ENCODE measurements at regions of chr6 and their contacts with region 1.

Region 1: GRCh38 chr6:110682460-110682853 is 132.8 kb downstream of the CDK19 start:
- DNase-seq: peak; percentile 54 to 85 (median 62)
- ATAC-seq: peak; percentile 100
- H3K4me3 ChIP-seq: no peak overlapping the region
- H3K27ac ChIP-seq: no peak overlapping the region
- H3K4me1 ChIP-seq: no peaks in the 10 kb centered on the region
- H3K27me3 ChIP-seq: no peaks in the 10 kb centered on the region
- CTCF ChIP-seq: peak; percentile 72 to 91 (median 72)
- EP300 ChIP-seq: peak; percentile 36; the same call in 1 of the 2 replicates
- POLR2A ChIP-seq: no peak
- RAD21 ChIP-seq: peak; percentile 97

Region 2: GRCh38 chr6:110528101-110528929 is 154.1 kb before region 1 on chr6:
- CTCF ChIA-PET with region 1: interaction called, 3 read pairs
- POLR2A ChIA-PET with region 1: no interaction called
- in situ Hi-C with region 1: no loop called
- intact Hi-C with region 1: loop called (anchors 1 kb)
- DNase-seq: peak; percentile 51 to 70 (median 56)
- ATAC-seq: peak; percentile 91
- H3K4me3 ChIP-seq: no peak overlapping the region
- H3K27ac ChIP-seq: no peak overlapping the region
- H3K4me1 ChIP-seq: no peaks in the 10 kb centered on the region; a peak in 1 of 5 replicates
- H3K27me3 ChIP-seq: peaks cover 5 to 13% of the 10 kb centered on the region in 2 experiments; a peak in 3 of 5 replicates
- CTCF ChIP-seq: peak; percentile 44 to 87 (median 73); a peak in 5 of 6 replicates
- EP300 ChIP-seq: no peak
- POLR2A ChIP-seq: no peak
- RAD21 ChIP-seq: peak; percentile 90 to 92

Region 3: DNA sequence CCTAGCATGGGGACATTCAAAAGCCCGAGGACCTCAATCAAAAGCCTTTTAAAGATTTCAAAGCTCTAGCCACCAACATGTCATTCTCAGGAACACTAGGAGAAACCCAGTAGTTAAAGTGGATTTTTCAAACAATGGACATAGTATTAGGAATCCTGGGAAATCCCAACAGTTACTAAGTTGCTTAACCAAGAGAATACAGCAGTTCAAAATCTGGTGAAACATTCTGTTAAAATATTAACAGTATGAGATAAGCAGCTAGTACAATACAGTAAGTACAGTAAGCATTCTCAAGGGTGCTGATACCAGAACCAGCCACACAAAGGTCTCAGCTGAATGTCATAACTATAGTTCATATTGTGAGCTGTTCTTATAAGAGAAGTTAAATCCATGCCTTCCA is 64.2 kb after region 1 on chr6:
- CTCF ChIA-PET with region 1: no interaction called
- POLR2A ChIA-PET with region 1: no interaction called
- in situ Hi-C with region 1: no loop called
- intact Hi-C with region 1: no loop called
- DNase-seq: no peak
- ATAC-seq: peak; percentile 57; the same call in 1 of the 3 replicates
- H3K4me3 ChIP-seq: no peak overlapping the region
- H3K27ac ChIP-seq: no peak overlapping the region
- H3K4me1 ChIP-seq: peaks cover 0 to 5% of the 10 kb centered on the region in 2 experiments; a peak in 1 of 5 replicates
- H3K27me3 ChIP-seq: no peaks in the 10 kb centered on the region
- CTCF ChIP-seq: no peak
- EP300 ChIP-seq: no peak
- POLR2A ChIP-seq: no peak
- RAD21 ChIP-seq: no peak

Region 4: DNA sequence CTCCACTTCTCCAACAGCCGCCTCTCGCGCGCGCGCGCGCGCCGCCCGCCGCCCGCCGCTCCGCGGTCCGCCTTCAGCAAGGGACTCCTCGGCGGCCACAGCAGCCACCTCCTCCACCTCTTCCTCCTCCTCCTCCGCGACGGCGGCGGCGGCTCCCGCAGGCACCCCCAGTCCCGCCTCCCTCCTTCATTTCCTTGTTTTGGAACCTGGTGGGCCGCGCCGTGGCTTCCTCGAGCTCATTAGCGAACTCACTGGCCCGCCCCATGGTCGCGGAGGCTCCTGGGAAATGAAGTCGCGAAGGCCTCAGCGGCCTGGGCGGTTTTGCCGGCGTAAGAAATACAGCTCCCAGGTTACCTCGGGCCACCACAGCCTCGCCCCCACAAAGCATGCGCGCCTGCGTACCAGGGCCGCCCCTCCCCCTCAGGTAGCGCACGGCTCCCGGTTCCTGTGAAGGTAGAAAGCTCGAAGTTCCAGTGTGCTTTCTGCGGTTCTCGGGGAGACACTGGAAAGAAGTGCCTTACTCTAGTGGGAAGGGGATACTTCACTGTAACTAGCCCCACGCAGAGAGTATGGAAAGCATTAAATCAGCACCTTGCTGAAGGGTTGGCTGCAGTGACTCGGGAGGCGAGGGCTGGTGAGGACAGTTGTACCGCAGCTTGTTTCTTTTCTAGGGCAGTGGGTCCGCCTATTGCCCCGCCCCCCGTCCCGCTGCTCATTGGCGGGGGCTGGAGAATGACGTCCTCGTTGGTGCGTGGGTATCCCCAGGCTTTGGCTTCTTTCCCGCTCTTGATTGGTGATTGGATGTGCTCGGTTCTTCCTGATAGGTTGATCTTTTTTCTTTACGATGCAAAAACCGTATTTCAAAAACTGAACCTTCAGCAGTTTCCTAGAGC is 133.0 kb after region 1 on chr6 and contains the start of gene CDK19:
- CTCF ChIA-PET with region 1: no interaction called
- POLR2A ChIA-PET with region 1: interaction called, 5 read pairs
- in situ Hi-C with region 1: no loop called
- intact Hi-C with region 1: loop called (anchors 5 kb)
- DNase-seq: peak; percentile 95 to 99 (median 97)
- ATAC-seq: peak; percentile 92
- H3K4me3 ChIP-seq: peak within 1 kb of the TSS; percentile 82
- H3K27ac ChIP-seq: peak within 1 kb of the TSS; percentile 100
- H3K4me1 ChIP-seq: peaks cover 21 to 42% of the 10 kb centered on the region in 2 experiments
- H3K27me3 ChIP-seq: no peaks in the 10 kb centered on the region
- CTCF ChIP-seq: no peak
- EP300 ChIP-seq: no peak
- POLR2A ChIP-seq: peak; percentile 99
- RAD21 ChIP-seq: 0 out of 4 replicates have a peak, but pooled peaks of 1 of the 2 experiments have one; percentile 9
- polyA plus RNA-seq, gene CDK19: 3.8 to 4.0 TPM

Region 5: GRCh38 chr6:110882271-110882613 is 199.8 kb after region 1 on chr6:
- CTCF ChIA-PET with region 1: no interaction called
- POLR2A ChIA-PET with region 1: interaction called, 7 read pairs
- in situ Hi-C with region 1: loop called (anchors 10 kb)
- intact Hi-C with region 1: loop called (anchors 2 kb)
- DNase-seq: no peak
- ATAC-seq: no peak
- H3K4me3 ChIP-seq: no peak overlapping the region
- H3K27ac ChIP-seq: no peak overlapping the region
- H3K4me1 ChIP-seq: peaks cover 24 to 35% of the 10 kb centered on the region in 2 experiments; a peak in 4 of 5 replicates
- H3K27me3 ChIP-seq: no peaks in the 10 kb centered on the region
- CTCF ChIP-seq: no peak
- EP300 ChIP-seq: no peak
- POLR2A ChIP-seq: no peak
- RAD21 ChIP-seq: no peak

Region 6: DNA sequence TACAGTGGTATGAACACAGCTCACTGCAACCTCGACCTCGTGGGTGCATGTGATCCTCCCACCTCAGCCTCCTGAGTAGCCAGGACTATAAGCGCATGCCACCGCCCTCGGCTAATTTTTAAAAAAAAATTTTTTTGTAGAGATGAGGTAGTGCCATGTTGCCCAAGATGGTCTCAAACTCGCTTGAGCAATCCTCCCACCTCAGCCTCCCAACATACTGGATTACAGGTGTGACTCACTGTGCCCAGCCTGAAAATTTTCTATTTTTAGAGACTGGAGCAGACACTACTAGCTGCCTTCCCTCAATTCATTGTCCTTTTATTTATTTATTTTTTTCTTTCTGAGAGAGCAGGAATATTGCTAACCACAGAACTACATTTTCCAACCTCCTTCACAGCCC is 255.7 kb after region 1 on chr6:
- CTCF ChIA-PET with region 1: no interaction called
- POLR2A ChIA-PET with region 1: no interaction called
- in situ Hi-C with region 1: no loop called
- intact Hi-C with region 1: no loop called
- DNase-seq: no peak
- ATAC-seq: no peak
- H3K4me3 ChIP-seq: no peak overlapping the region
- H3K27ac ChIP-seq: no peak overlapping the region
- H3K4me1 ChIP-seq: peaks cover 4 to 9% of the 10 kb centered on the region in 2 experiments; a peak in 4 of 5 replicates
- H3K27me3 ChIP-seq: no peaks in the 10 kb centered on the region
- CTCF ChIP-seq: no peak
- EP300 ChIP-seq: no peak
- POLR2A ChIP-seq: no peak
- RAD21 ChIP-seq: no peak

Region 7: GRCh38 chr6:110949679-110950285 is 267.3 kb after region 1 on chr6:
- CTCF ChIA-PET with region 1: interaction called, 22 read pairs
- POLR2A ChIA-PET with region 1: no interaction called
- in situ Hi-C with region 1: loop called (anchors 5 kb)
- intact Hi-C with region 1: loop called (anchors 1 kb)
- DNase-seq: peak in 1 of 4 experiments; percentile 32
- ATAC-seq: no peak
- H3K4me3 ChIP-seq: no peak overlapping the region
- H3K27ac ChIP-seq: no peak overlapping the region
- H3K4me1 ChIP-seq: no peaks in the 10 kb centered on the region; a peak in 2 of 5 replicates
- H3K27me3 ChIP-seq: no peaks in the 10 kb centered on the region
- CTCF ChIP-seq: peak; percentile 46 to 76 (median 57); a peak in 5 of 6 replicates
- EP300 ChIP-seq: no peak
- POLR2A ChIP-seq: no peak
- RAD21 ChIP-seq: peak; percentile 41 to 70

Region 8: DNA sequence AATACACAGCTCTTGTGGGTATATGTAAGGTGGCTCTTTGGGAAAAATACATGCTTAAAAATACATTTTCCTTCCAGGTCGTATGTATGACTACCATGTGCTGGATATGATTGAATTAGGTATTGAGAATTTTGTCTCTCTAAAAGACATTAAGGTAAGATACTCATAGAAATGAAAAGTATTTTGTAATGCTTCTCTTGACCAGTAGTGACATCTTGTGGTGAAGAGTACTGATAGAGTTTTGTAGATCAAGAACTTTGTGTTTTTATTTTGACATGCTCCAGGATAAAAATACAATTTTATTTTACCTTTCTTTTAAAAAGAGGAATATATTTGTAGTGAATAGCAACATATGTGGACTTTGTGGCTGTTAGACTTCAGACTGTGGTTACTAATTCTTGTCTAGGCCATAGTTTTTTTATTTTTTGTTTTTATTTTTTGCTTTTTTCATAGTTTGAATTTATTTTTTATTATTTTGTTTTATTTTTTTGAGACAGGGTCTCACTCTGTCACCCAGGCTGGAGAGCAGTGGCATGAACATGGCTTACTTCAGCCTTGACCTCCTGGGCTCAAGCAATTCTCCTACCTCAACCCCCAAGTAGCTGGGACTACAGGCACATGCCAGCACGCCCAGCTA is 317.3 kb after region 1 on chr6:
- CTCF ChIA-PET with region 1: interaction called, 8 read pairs
- POLR2A ChIA-PET with region 1: interaction called, 3 read pairs
- in situ Hi-C with region 1: no loop called
- intact Hi-C with region 1: loop called (anchors 5 kb)
- DNase-seq: peak in 1 of 4 experiments; percentile 11
- ATAC-seq: peak; percentile 62
- H3K4me3 ChIP-seq: no peak overlapping the region
- H3K27ac ChIP-seq: no peak overlapping the region
- H3K4me1 ChIP-seq: no peaks in the 10 kb centered on the region; a peak in 1 of 5 replicates
- H3K27me3 ChIP-seq: no peaks in the 10 kb centered on the region
- CTCF ChIP-seq: peak in 1 of 3 experiments; percentile 52; a peak in 2 of 6 replicates
- EP300 ChIP-seq: no peak
- POLR2A ChIP-seq: no peak
- RAD21 ChIP-seq: peak; percentile 70 to 71

Measured in K562 (cell line).